Upper lobe of right lung (tissue), 1 donor: ENCODE measurements at regions of chr6 and their contacts with region 1.

Region 1: GRCh38 chr6:130879826-130880225 is 52.6 kb downstream of the SMLR1 start:
- DNase-seq: no peak
- ATAC-seq: no peak
- H3K4me3 ChIP-seq: no peak overlapping the region
- H3K27ac ChIP-seq: no peak overlapping the region
- H3K4me1 ChIP-seq: no peaks in the 10 kb centered on the region
- H3K27me3 ChIP-seq: no peaks in the 10 kb centered on the region
- CTCF ChIP-seq: no peak

Region 2: DNA sequence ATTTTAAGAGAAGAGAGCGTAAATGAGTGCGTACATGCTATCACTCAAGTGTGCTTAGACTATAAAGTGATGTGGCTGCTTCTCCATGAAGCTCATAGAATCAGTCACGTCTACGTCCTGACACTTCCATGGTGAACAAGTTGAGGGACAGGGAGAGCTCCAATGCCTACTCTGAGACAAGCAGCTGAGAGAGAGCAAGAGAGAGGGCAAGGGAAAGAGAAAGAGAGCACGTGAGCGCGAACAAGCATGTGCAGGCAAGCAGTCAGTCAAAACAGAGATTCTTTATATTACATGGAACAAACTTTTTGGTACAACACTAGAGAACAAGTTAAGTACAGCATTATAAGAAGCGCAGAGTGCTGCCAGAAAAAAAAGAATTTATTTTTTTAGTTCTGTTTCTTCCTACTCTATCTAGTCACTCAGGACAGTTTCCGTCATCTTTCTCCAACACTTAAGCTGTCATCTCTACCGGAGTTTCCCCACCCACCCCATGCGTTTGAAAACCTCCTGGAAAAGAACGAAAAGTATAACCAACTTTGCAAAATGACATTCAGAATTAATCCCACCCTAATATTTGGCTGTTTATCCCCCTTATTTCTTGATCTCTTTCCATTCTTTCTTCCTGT is 121.4 kb after region 1 on chr6:
- intact Hi-C with region 1: no loop called
- DNase-seq: no peak
- ATAC-seq: no peak
- H3K4me3 ChIP-seq: no peak overlapping the region
- H3K27ac ChIP-seq: no peak overlapping the region
- H3K4me1 ChIP-seq: peaks cover 14% of the 10 kb centered on the region
- H3K27me3 ChIP-seq: no peaks in the 10 kb centered on the region
- CTCF ChIP-seq: no peak

Region 3: DNA sequence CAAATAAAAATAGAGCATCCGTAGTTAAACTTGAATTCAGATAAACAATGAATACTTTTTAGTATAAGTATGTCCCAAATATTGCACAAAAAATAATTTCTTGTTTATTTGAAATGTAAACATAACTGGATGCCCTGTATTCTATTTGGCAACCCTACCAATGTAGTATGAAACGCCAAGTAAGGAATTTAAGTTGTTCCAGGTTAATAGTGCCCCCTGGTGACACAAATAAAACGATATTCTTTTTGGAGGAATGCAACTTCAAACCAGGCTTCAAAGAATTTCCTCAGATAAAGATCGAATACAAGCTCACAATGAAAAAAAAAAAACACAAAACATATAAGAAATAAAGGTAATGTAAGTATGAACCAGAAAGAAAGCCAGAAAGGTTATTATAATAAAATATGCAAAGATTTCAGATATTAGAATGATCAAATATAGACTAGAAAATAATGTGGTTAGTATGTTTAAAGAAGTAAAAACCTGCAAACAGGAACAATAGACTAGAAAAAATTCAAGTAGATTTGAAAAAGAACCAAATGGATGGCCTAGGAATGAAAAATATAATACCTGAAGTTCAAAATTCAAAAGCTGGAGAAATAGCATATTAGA is 237.0 kb after region 1 on chr6:
- intact Hi-C with region 1: loop called (anchors 5 kb)
- DNase-seq: no peak
- ATAC-seq: peak; percentile 75
- H3K4me3 ChIP-seq: no peak overlapping the region
- H3K27ac ChIP-seq: no peak overlapping the region
- H3K4me1 ChIP-seq: no peaks in the 10 kb centered on the region
- H3K27me3 ChIP-seq: no peaks in the 10 kb centered on the region
- CTCF ChIP-seq: peak; percentile 62